PC-9 (cell line): ENCODE measurements at regions of chr12 and their contacts with region 1.

Region 1: GRCh38 chr12:27142101-27142721 is 59.8 kb upstream of the C12orf71 start:
- DNase-seq: peak; percentile 44 to 64
- H3K4me3 ChIP-seq: no peak overlapping the region
- H3K27ac ChIP-seq: no peak overlapping the region
- H3K4me1 ChIP-seq: no peaks in the 10 kb centered on the region
- H3K27me3 ChIP-seq: no peaks in the 10 kb centered on the region
- CTCF ChIP-seq: peak; percentile 89

Region 2: DNA sequence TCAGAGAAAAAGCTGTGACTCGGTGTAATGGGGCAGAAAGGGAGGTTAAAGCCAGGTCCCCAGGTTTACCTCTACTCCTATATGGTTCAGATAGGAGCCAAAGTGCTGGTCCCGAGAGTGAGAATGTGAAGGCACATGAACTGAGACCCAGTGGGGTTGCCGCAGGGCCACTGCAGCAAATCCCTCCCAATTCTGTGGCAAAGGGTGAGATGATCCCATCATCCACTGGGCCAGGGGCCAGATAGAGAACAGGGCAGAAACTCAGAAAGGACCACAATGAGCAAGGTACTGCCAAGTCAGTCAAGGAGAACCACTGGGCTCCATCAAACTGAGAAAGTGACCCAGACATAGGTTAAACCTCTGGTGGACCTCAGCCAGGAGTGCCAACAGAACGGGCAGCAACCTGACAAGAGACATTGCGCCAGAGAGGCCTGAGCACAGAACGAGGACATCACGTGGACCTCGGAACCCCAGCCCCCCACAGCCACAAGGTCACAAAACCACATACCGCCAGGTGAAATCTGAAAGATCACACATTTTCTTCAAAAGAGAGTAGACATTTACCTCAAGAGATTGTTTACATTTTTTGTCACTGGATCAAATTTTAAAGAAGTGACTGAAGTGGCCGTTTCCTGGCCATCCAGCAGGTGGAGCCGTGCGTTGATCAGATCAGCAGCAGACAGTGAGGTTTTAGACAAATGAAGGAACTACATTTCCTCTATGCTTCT is 288.7 kb before region 1 on chr12:
- CTCF ChIA-PET with region 1: no interaction called
- POLR2A ChIA-PET with region 1: no interaction called
- intact Hi-C with region 1: loop called (anchors 10 kb)
- DNase-seq: peak in 1 of 2 experiments; percentile 71
- H3K4me3 ChIP-seq: no peak overlapping the region
- H3K27ac ChIP-seq: no peak overlapping the region
- H3K4me1 ChIP-seq: peaks cover 5% of the 10 kb centered on the region
- H3K27me3 ChIP-seq: no peaks in the 10 kb centered on the region
- CTCF ChIP-seq: peak; percentile 83

Region 3: DNA sequence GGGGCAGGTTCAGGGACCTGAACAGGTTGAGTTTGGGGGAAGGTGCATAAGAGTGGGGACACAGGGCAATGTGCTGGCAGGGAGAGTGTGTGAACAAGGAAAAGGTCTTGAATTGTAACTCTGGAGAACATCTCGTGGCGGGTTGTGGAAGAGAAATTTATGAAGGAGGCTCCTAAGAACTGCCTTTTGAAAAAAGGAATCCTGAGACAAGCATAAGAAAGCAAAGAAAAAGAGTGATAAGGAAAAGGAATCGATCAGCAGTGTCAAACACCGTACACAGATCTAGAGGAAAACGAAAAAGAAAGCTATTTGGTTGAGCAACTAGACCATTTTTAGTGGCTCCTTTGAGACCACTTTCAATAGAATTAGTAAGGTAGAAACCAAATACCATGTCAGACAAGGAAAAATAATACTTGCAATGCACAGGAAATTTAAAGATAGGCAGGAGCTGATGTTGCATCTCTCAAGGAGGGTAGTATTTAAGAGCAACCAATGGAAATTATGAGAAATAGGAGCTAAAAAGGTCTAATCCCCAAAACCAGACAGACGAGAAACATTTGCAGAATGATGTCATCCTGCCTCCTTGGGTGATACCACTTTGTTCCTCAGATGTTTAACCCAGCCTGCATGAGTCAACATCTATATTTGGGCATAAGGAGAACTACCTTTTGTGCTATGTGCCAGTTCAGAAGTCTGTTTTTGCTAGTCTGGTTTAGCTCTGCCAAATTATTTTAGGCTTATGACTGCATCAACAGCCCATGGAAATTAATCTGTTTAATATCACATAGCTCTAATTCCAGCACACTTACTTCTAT is 37.4 kb after region 1 on chr12:
- CTCF ChIA-PET with region 1: no interaction called
- POLR2A ChIA-PET with region 1: no interaction called
- intact Hi-C with region 1: loop called (anchors 2 kb)
- DNase-seq: peak; percentile 73 to 97
- H3K4me3 ChIP-seq: no peak overlapping the region
- H3K27ac ChIP-seq: peak overlapping the region; percentile 90
- H3K4me1 ChIP-seq: peaks cover 66% of the 10 kb centered on the region
- H3K27me3 ChIP-seq: no peaks in the 10 kb centered on the region
- CTCF ChIP-seq: no peak

Region 4: DNA sequence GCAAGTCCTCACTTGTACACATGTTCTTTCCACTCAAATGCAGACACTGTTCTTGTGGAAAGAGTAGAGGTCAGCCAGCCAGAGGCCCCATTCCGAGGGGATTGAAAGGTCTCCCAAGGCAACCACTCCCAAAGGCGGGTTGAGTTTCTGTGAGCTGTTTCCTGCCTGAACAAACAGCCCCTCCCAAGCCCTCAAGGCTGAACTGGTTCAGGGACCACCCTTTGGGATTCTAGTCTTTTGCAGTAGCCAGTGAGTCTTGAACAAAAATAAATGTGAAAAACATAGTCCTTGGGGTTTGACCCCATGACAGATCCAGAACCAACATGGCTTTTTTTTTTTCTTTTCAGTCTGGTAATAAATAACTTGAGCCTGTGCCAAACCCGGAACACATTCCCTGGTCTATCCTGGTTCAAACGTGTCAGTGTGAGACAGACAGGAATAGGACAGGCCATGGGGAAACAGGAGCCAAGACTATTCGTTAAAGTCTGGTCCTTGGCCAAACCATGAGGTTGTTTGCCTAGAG is 84.3 kb after region 1 on chr12:
- CTCF ChIA-PET with region 1: no interaction called
- POLR2A ChIA-PET with region 1: no interaction called
- intact Hi-C with region 1: loop called (anchors 5 kb)
- DNase-seq: peak in 1 of 2 experiments; percentile 25
- H3K4me3 ChIP-seq: no peak overlapping the region
- H3K27ac ChIP-seq: peak overlapping the region; percentile 24; the same call in 1 of the 2 replicates
- H3K4me1 ChIP-seq: peaks cover 8% of the 10 kb centered on the region; the same call in 1 of the 2 replicates
- H3K27me3 ChIP-seq: no peaks in the 10 kb centered on the region
- CTCF ChIP-seq: no peak

Region 5: DNA sequence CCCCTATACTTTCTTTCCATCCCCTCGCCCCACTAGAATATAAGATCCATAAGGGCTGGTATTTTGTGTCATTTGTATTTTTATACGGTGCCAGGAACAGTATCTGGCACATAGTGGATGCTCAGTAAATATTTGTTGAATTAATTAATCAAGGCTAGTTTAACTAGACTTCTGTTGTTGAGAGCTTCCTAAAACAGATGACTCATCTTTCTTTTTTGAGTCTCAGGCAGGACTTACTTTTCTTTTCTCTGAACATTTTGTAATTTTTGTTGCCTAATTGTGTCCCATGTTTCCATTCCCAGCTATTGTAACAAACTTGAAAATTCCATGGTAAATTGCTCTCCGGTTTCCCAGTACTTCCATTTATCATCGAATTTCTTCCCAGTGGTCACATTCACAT is 118.5 kb after region 1 on chr12:
- CTCF ChIA-PET with region 1: no interaction called
- POLR2A ChIA-PET with region 1: no interaction called
- intact Hi-C with region 1: no loop called
- DNase-seq: no peak
- H3K4me3 ChIP-seq: no peak overlapping the region
- H3K27ac ChIP-seq: no peak overlapping the region
- H3K4me1 ChIP-seq: no peaks in the 10 kb centered on the region
- H3K27me3 ChIP-seq: no peaks in the 10 kb centered on the region
- CTCF ChIP-seq: no peak